Mammary epithelial cell (primary cell): ENCODE measurements at regions of chr6 and their contacts with region 1.

Region 1: GRCh38 chr6:148128014-148128730 is 214.5 kb upstream of the SASH1 start:
- DNase-seq: peak; percentile 68
- H3K4me3 ChIP-seq: no peak overlapping the region
- H3K27ac ChIP-seq: no peak overlapping the region
- H3K4me1 ChIP-seq: peaks cover 15% of the 10 kb centered on the region
- H3K27me3 ChIP-seq: no peaks in the 10 kb centered on the region
- CTCF ChIP-seq: no peak

Region 2: GRCh38 chr6:148157542-148158240 is 29.5 kb after region 1 on chr6:
- CTCF ChIA-PET with region 1: no interaction called
- dilution Hi-C with region 1: loop called (anchors 5 kb)
- in situ Hi-C with region 1: no loop called
- intact Hi-C with region 1: no loop called
- DNase-seq: peak; percentile 1
- H3K4me3 ChIP-seq: no peak overlapping the region
- H3K27ac ChIP-seq: no peak overlapping the region
- H3K4me1 ChIP-seq: peaks cover 6% of the 10 kb centered on the region
- H3K27me3 ChIP-seq: no peaks in the 10 kb centered on the region
- CTCF ChIP-seq: no peak